AG04449 (cell line): ENCODE measurements at regions of chr10 and their contacts with region 1.

Region 1: GRCh38 chr10:72364239-72364777 is 9.6 kb upstream of the DNAJB12 start:
- DNase-seq: peak; percentile 80
- H3K4me3 ChIP-seq: peak overlapping the region; percentile 12; the same call in 1 of the 2 replicates
- CTCF ChIP-seq: peak; percentile 92

Region 2: DNA sequence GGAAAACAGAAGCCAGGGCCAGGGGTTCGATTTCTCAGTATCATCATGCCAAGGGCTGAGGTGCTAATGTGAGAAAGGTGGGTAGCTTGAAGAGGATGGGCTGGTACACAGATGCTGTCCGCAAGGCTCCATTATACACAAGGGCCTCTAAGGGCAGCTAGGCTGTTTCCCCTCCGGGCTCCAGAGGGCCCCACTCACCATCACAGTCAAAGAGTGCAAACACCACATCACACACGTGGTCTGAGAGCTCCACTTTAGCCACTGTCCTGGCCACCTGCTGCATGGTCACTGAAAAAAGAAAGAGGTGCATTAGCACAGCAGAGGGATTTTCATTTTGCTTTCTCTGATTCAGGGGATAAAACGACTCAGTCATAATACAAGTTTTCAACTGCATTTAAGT is 11.3 kb after region 1 on chr10:
- CTCF ChIA-PET with region 1: interaction called, 14 read pairs
- POLR2A ChIA-PET with region 1: no interaction called
- DNase-seq: no peak
- H3K4me3 ChIP-seq: no peak overlapping the region
- CTCF ChIP-seq: peak; percentile 18

Region 3: DNA sequence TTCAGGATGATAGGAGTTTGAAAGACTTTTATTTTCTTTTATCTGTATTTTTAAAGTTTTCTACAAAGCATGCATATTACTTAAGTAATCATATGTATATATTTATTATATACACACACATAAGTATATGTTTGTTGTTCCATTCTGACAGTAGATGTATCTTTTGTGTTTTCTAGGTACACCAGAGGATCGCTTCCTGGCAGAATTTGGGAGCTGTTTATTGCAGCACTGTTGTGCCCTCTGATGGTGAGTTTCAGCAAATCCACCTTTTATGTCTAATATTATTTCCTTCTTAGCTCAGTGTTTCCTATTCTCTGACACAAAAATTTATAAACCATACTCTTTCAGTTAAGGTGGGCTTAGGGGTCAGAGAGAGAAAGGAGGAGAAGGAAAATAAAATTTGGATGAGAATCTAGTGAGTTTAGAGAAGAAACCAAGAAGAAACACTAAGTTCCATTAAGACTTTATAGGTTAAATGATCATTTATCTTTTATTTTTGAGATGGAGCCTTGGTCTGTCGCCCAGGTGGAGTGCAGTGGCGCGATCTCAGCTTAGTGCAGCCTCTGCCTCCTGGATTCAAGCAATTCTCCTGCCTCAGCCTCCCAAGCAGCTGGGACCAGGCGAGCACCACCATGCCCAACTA is 470.0 kb after region 1 on chr10:
- CTCF ChIA-PET with region 1: interaction called, 87 read pairs
- POLR2A ChIA-PET with region 1: no interaction called
- DNase-seq: peak; percentile 24
- H3K4me3 ChIP-seq: no peak overlapping the region
- CTCF ChIP-seq: peak; percentile 41

Region 4: DNA sequence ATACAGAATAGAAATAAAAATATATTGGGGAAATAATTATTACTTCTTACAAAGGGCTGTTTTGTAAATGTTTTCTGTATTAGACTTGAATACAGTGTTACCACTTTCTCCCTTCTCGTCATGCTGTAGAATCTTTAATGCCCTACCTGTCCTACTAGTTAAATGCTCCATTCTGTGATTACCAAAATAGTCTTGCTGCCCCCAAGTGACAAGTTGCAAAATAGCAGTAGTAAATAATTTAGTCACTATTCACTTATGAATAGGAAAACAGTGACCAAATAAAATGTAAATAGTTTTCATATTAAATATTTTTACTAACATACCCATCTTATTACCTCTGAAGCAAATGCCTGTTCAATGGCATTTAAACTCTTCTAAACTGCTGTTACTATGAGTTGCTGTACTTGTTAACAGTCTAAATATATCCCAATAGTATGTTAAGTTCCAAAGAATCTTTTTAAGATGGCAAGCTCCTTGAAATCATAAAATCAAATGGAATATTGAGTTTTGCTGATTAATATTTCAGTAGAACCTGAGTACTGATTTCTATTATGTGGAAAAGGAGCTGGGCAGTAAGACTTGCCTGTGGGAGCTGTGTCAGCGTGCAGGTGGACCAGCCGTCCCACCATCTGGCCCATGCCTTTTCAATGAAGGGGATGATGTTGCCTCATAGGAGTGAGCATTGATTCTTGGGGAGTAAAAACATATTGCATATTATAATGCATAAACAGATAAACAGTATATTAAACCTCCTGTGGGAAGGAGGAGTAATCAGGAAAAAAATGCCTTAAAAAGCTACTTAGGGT is 511.1 kb after region 1 on chr10:
- CTCF ChIA-PET with region 1: interaction called, 44 read pairs
- POLR2A ChIA-PET with region 1: no interaction called
- DNase-seq: no peak
- H3K4me3 ChIP-seq: no peak overlapping the region
- CTCF ChIP-seq: peak; percentile 24